ENCODE measurements at regions of chr9 and their contacts with region 1.

Region 1: DNA sequence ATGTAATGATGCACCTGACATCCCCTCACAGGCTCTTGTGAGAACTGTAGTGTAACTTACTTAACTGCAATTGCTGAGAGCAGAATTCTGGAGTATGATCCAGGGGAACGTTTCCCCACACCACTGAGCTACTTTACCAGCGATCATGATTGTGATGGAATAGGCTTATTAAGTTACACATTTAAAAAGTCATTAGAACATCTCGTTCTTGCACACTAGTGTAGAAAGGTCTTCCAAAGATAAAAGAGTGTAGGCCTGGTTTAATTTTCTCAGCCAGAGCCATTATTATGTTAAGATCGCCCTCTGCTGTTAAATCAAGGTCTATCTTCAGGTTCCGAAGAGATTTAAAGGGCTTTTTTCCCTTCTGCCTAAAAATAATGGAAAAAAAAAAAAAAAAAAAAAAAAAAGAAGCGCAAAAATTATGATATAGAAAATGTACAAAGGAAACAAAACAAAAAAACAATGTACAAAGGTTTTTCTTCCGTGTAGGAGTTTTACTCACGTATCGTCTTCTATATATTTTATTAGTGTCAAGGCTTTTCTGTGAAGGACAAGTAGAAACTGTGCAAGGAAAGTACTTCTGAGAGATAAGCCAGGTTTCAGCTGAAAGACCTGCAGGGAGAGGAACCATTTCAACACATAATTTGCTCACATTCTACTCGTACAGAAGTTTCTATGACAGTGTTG is 18.6 kb upstream of the MOB3B start:
- DNase-seq: no peak
- ATAC-seq: peak; percentile 71 to 75
- H3K4me3 ChIP-seq: no peak overlapping the region
- H3K27ac ChIP-seq: no peak overlapping the region
- H3K4me1 ChIP-seq: no peaks in the 10 kb centered on the region
- H3K27me3 ChIP-seq: no peaks in the 10 kb centered on the region
- CTCF ChIP-seq: peak; percentile 55

Region 2: DNA sequence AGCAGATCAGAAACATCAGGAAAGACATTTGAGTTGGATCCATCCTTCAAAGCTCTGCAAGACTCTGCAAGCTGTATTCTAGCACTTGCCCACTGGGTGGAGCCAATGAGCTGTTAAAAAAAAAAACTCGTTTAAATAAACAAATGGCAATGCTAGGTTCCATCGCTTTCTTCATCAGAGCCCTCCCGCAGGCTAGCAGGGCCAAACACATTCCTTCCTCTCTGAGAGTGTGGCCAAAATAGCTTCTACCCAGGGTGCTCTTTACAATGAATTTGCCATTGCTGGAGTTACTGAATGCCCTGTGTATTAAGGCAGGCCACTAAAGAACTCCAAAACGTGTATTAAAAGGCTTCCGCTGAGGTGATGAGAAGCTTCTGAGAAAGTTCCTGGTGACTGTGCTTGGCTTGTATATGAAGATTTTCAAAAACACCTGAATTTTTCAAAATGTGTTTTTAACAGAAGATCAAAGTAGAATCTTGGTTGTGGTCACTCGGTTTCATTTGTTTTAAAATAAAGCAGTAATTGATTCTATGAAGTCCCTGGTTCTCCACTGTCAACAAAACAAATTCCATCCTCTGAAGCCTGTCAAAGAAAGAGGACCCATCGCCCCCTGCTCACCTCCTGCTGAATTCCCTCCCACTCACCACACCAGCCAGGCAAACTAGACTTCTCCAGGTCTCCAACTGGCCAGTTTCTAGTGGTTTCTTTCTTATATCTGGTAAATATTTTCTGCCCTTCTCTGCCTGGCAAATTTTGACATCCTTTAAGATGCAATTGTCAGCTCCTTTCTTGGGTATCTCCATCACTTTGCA is 214.8 kb before region 1 on chr9:
- intact Hi-C with region 1: loop called (anchors 5 kb)
- DNase-seq: peak; percentile 57
- ATAC-seq: peak; percentile 71 to 84
- H3K4me3 ChIP-seq: no peak overlapping the region
- H3K27ac ChIP-seq: no peak overlapping the region
- H3K4me1 ChIP-seq: peaks cover 36% of the 10 kb centered on the region
- H3K27me3 ChIP-seq: no peaks in the 10 kb centered on the region
- CTCF ChIP-seq: peak; percentile 92

Region 3: GRCh38 chr9:27732494-27732893 is 184.3 kb after region 1 on chr9:
- intact Hi-C with region 1: no loop called
- DNase-seq: no peak
- ATAC-seq: no peak
- H3K4me3 ChIP-seq: no peak overlapping the region
- H3K27ac ChIP-seq: no peak overlapping the region
- H3K4me1 ChIP-seq: no peaks in the 10 kb centered on the region
- H3K27me3 ChIP-seq: no peaks in the 10 kb centered on the region
- CTCF ChIP-seq: no peak